Heart left ventricle (tissue), 16 donors: ENCODE measurements at regions of chr3 and their contacts with region 1.

Region 1: GRCh38 chr3:195337747-195338146 is 66.8 kb upstream of the XXYLT1 start:
- DNase-seq: no peak
- ATAC-seq: no peak
- H3K4me3 ChIP-seq: no peak overlapping the region
- H3K27ac ChIP-seq: no peak overlapping the region
- H3K4me1 ChIP-seq: no peaks in the 10 kb centered on the region
- H3K27me3 ChIP-seq: no peaks in the 10 kb centered on the region
- CTCF ChIP-seq: no peak
- POLR2A ChIP-seq: no peak

Region 2: GRCh38 chr3:195394024-195394423 is 56.3 kb after region 1 on chr3:
- intact Hi-C with region 1: loop called in 1 of 10 experiments (anchors 10 kb)
- DNase-seq: no peak
- ATAC-seq: no peak
- H3K4me3 ChIP-seq: no peak overlapping the region
- H3K27ac ChIP-seq: no peak overlapping the region
- H3K4me1 ChIP-seq: peaks cover 0 to 40% (median 17%) of the 10 kb centered on the region in 12 donors
- H3K27me3 ChIP-seq: no peaks in the 10 kb centered on the region
- CTCF ChIP-seq: no peak
- POLR2A ChIP-seq: no peak

Region 3: DNA sequence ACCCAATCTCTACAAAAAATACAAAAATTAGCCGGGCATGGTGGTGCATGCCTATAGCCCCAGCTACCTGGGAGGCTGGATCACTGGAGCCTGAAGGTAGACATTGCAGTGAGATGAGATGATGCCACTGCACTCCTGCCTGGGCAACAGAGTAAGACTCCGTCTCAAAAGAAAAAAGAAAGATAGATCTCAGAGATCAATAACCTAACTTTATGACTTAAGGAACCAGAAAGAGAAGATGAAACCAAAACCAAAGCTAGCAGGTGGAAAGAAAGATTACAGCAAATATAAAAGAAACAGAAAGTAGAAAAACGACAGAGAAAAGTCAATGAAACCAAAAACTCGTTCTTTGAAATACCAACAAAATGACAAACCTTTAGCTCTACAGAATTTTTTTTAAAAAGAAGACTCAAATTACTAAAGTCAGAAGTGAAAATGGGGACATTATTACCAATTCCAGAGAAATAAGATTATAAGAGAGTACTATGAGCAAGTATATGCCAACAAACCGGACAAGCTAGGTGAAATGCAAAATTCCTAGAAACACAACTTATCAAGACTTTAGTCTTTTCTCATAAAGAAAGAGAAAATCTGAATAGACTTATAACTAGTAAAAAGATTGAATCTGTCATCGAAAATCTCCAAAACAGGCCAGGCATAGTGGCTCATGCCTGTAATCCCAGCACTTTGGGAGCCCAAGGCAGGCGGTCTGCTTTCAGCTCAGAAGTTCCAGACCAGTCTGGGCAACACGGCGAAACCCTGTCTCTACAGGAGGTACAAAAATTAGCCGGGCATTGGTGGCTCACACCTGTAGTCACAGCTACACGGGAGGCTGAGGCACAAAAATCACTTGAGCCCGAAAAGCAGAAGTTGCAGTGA is 70.0 kb after region 1 on chr3:
- intact Hi-C with region 1: no loop called
- DNase-seq: no peak
- ATAC-seq: no peak
- H3K4me3 ChIP-seq: no peak overlapping the region
- H3K27ac ChIP-seq: no peak overlapping the region
- H3K4me1 ChIP-seq: peaks cover 0 to 52% (median 3%) of the 10 kb centered on the region in 12 donors
- H3K27me3 ChIP-seq: no peaks in the 10 kb centered on the region
- CTCF ChIP-seq: no peak
- POLR2A ChIP-seq: no peak

Region 4: DNA sequence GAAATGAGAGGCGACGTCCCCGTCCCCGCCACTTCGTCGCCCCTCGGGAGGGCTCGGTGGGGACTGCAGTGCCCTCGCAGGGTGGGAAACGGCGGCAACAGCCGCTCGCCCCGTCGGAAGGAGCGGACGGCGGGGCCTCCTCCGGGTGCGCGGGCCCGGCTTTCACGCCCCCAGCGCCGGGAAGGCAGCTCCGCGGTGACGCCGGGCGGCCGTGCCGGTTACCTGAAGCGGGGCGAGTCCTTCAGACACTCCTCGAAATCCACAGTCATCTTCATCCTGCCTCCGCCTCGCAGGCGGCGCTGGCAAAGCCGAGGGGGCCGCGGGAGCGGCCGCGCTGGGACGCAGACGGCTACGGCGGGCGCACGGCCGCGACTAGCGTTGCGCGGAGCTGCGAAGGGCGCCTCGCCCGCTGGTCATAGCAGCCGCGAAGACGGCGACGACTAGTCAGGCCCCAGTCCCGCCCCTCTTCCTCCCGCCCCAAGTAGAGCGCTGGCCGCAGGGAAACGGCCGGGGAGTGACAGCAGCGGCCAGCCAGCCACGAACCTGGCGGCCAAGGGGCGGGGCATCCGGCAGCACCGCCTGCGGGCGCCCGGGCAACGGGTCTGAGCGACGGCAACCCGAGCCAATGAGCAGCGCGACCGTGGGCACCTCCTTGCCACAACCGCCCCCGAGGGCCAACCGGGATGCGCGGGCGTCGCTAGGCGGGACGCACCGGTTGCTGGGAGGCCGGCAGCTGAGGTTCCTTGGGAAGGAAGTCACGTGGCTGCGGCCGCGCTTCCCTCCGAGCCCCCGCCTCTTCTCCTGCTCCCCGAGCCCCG is 105.0 kb after region 1 on chr3 and contains the start of gene ACAP2:
- intact Hi-C with region 1: no loop called
- DNase-seq: peak; percentile 100
- ATAC-seq: peak; percentile 98 to 99 (median 99)
- H3K4me3 ChIP-seq: peak within 1 kb of the TSS; percentile 54 to 100 (median 94)
- H3K27ac ChIP-seq: peak within 1 kb of the TSS; percentile 47 to 99 (median 96)
- H3K4me1 ChIP-seq: peaks cover 3 to 33% (median 23%) of the 10 kb centered on the region in 12 donors
- H3K27me3 ChIP-seq: no peaks in the 10 kb centered on the region
- CTCF ChIP-seq: no peak
- POLR2A ChIP-seq: peak; percentile 71 to 98
- total RNA-seq, gene ACAP2: 12.5 to 39.2 (median 16.3) TPM